ENCODE measurements at regions of chrX and their contacts with region 1.

Region 1: GRCh38 chrX:88135735-88136134 is 611.3 kb upstream of the CPXCR1 start:
- DNase-seq: no peak
- H3K4me3 Mint-ChIP-seq: no peak overlapping the region
- H3K27ac Mint-ChIP-seq: no peak overlapping the region
- H3K4me1 Mint-ChIP-seq: no peaks in the 10 kb centered on the region
- H3K27me3 Mint-ChIP-seq: no peaks in the 10 kb centered on the region
- CTCF ChIP-seq: no peak

Region 2: DNA sequence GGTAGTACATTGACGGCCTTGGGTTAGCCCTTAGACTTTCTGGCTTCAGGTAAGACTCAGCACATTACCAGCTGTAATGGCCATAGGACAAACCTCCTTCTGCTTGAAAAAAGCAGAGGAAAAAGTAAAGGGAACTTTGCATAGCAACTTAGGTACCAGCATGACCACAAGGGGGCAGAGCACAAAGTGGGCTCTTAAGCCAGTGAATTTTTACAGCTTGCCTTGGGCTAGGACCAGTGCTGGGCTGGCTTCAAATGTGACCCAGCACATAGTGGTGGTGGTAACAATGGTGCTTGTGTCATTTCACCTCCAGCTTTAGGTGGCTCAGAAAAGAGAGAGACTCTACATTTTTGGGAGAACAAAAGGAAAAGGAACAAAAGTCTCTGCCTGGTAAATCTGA is 552.1 kb before region 1 on chrX:
- CTCF ChIA-PET with region 1: no interaction called
- intact Hi-C with region 1: no loop called
- DNase-seq: peak; percentile 1
- H3K4me3 Mint-ChIP-seq: no peak overlapping the region
- H3K27ac Mint-ChIP-seq: no peak overlapping the region
- H3K4me1 Mint-ChIP-seq: no peaks in the 10 kb centered on the region
- H3K27me3 Mint-ChIP-seq: no peaks in the 10 kb centered on the region
- CTCF ChIP-seq: no peak

Region 3: GRCh38 chrX:87846956-87847355 is 288.8 kb before region 1 on chrX:
- CTCF ChIA-PET with region 1: no interaction called
- intact Hi-C with region 1: no loop called
- DNase-seq: no peak
- H3K4me3 Mint-ChIP-seq: no peak overlapping the region
- H3K27ac Mint-ChIP-seq: no peak overlapping the region
- H3K4me1 Mint-ChIP-seq: no peaks in the 10 kb centered on the region
- H3K27me3 Mint-ChIP-seq: no peaks in the 10 kb centered on the region
- CTCF ChIP-seq: no peak

Region 4: DNA sequence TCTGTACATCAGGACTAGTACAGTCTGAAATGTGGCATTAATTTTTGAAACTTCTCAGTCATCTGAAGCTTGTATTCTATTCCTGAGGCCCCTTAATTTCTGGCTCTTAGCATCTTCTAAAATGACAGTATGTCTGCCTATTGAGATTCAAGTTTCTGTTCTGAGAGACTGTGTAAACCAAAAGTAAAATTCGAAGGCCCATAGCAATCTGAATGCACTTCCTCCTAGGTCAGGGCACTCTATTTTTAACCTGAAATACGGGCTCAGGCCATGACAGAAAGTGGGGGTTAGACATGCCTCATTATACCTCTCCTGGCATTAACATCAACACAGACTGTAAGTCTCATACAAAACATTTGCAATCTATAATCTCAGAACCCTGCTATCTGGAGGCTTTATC is 33.8 kb before region 1 on chrX:
- CTCF ChIA-PET with region 1: no interaction called
- intact Hi-C with region 1: no loop called
- DNase-seq: no peak
- H3K4me3 Mint-ChIP-seq: no peak overlapping the region
- H3K27ac Mint-ChIP-seq: no peak overlapping the region
- H3K4me1 Mint-ChIP-seq: no peaks in the 10 kb centered on the region
- H3K27me3 Mint-ChIP-seq: no peaks in the 10 kb centered on the region
- CTCF ChIP-seq: no peak

Region 5: GRCh38 chrX:88613338-88613737 is 477.6 kb after region 1 on chrX:
- CTCF ChIA-PET with region 1: no interaction called
- intact Hi-C with region 1: loop called (anchors 5 kb)
- DNase-seq: no peak
- H3K4me3 Mint-ChIP-seq: no peak overlapping the region
- H3K27ac Mint-ChIP-seq: no peak overlapping the region
- H3K4me1 Mint-ChIP-seq: no peaks in the 10 kb centered on the region
- H3K27me3 Mint-ChIP-seq: no peaks in the 10 kb centered on the region
- CTCF ChIP-seq: no peak

Measured in Calu3 (cell line).